AG04450 (cell line): ENCODE measurements at regions of chr13 and their contacts with region 1.

Region 1: GRCh38 chr13:80342471-80343380 is 1.8 kb upstream of the SPRY2 start:
- DNase-seq: no peak
- H3K4me3 ChIP-seq: peak overlapping the region; percentile 95
- H3K27ac ChIP-seq: peak overlapping the region; percentile 65
- H3K27me3 ChIP-seq: no peaks in the 10 kb centered on the region
- CTCF ChIP-seq: peak; percentile 84

Region 2: GRCh38 chr13:79749984-79750551 is 592.7 kb before region 1 on chr13:
- CTCF ChIA-PET with region 1: interaction called, 18 read pairs
- POLR2A ChIA-PET with region 1: interaction called, 4 read pairs
- DNase-seq: peak; percentile 88
- H3K4me3 ChIP-seq: no peak overlapping the region
- H3K27ac ChIP-seq: no peak overlapping the region
- H3K27me3 ChIP-seq: no peaks in the 10 kb centered on the region
- CTCF ChIP-seq: no peak

Region 3: DNA sequence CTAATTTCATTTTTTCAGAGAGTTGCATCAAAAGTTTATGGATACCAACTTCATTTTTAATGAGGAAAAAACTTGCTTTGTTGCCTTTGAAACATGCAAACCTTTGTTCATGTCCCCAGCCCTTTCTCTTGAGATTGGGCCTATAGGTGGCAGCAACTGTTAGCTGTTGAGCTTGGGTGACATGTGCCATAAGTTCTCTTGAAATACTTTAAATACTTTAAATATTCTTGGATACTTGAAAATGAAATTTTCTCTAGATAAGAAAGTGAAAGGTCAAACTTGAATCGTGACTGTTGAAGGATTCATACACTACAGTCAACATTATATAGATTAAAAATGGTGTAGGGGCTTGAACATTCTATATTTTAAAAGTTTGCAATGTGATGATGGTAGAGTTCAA is 566.9 kb before region 1 on chr13:
- CTCF ChIA-PET with region 1: interaction called, 15 read pairs
- POLR2A ChIA-PET with region 1: no interaction called
- DNase-seq: peak; percentile 47
- H3K4me3 ChIP-seq: no peak overlapping the region
- H3K27ac ChIP-seq: no peak overlapping the region
- H3K27me3 ChIP-seq: no peaks in the 10 kb centered on the region
- CTCF ChIP-seq: peak; percentile 76

Region 4: GRCh38 chr13:79936368-79937136 is 406.2 kb before region 1 on chr13:
- CTCF ChIA-PET with region 1: interaction called, 21 read pairs
- POLR2A ChIA-PET with region 1: interaction called, 5 read pairs
- DNase-seq: peak; percentile 97
- H3K4me3 ChIP-seq: no peak overlapping the region; the same call in 1 of the 2 replicates
- H3K27ac ChIP-seq: peak overlapping the region; percentile 99
- H3K27me3 ChIP-seq: no peaks in the 10 kb centered on the region
- CTCF ChIP-seq: no peak

Region 5: DNA sequence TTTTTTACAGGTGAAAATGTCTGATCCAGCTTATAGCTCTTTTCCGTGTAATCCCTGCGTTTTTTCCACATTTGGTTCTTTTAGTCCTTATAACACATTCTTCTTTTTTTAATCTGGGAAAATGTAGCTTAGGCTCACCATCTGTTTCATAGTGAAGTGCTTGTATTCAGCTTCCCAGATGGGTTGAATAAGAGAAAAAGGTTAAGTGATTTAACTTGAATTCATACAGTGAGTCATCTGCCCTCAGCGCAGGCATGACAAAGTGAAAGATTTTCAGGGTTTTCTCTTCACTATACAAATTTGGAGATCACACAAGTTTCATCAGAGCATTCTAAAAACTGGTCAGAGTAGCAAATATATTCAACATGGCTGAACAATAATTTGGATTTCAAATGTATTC is 226.6 kb before region 1 on chr13:
- CTCF ChIA-PET with region 1: interaction called, 10 read pairs
- POLR2A ChIA-PET with region 1: no interaction called
- DNase-seq: peak; percentile 49
- H3K4me3 ChIP-seq: no peak overlapping the region
- H3K27ac ChIP-seq: no peak overlapping the region
- H3K27me3 ChIP-seq: no peaks in the 10 kb centered on the region
- CTCF ChIP-seq: no peak

Region 6: DNA sequence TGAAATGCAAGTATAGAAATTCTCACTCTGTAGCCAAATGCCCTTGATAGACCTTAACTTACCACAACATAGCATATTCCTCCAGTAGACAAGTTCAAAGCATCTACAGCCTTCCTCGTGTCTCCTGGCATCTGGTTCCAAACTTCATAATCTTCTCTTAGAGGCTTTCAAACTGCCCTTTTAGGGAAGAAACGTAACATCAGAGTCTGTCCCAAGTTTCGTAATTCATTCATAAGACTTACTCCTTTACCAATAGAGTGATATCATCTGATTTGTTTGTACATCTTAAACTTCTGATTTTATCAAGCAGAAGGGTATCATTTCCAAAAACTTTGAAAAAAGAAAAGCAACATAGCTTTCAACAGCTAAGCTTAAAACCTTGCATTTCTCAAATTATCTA is 139.2 kb before region 1 on chr13:
- CTCF ChIA-PET with region 1: interaction called, 12 read pairs
- POLR2A ChIA-PET with region 1: no interaction called
- DNase-seq: no peak
- H3K4me3 ChIP-seq: no peak overlapping the region
- H3K27ac ChIP-seq: no peak overlapping the region
- H3K27me3 ChIP-seq: no peaks in the 10 kb centered on the region
- CTCF ChIP-seq: no peak

Region 7: DNA sequence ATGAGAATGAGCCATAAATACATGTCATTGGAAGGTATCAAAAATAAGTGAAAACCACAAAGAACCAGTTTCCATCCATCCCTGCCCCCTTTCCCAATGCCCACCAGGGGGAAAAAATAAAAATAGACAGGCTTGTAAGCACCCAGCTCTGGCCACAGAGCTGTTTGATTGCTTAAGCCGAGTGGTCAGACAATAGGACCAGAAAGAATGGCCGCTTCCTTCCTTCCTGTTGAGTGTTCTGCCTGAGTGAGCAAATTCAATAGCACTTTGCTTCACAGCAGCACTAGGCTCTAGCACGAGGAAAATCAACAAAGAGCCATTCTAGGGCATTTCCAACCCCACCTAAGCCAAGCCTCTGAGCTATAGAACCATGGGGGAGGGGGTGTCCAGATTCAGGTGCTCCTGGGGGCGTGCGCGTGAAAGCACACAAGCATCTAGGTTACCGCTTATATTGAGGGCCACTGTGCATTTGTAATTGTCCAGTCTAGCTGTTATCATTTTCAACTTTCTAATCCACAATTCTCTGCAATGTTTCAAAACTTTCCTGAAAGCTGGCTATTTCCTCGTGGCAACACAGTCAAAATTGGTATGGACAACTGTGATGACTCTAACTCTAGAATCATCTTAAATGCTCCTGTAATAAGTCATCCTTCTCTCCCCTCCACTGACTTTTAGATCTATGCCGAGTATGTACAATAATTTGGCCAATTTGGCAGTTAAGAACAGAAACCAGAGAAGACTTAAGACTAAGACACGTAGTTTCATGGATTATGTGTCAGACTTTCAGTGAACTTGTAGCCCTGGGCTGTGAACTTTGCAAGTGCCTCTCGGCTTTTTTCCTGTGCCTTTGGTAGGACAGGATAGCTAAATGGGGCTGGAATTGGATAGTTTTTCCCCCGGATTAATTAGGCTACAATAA is 66.1 kb before region 1 on chr13:
- CTCF ChIA-PET with region 1: no interaction called
- POLR2A ChIA-PET with region 1: no interaction called
- DNase-seq: no peak
- H3K4me3 ChIP-seq: no peak overlapping the region
- H3K27ac ChIP-seq: no peak overlapping the region
- H3K27me3 ChIP-seq: no peaks in the 10 kb centered on the region
- CTCF ChIP-seq: no peak

Region 8: GRCh38 chr13:80363890-80364503 is 21.3 kb after region 1 on chr13:
- CTCF ChIA-PET with region 1: interaction called, 39 read pairs
- POLR2A ChIA-PET with region 1: interaction called, 5 read pairs
- DNase-seq: no peak
- H3K4me3 ChIP-seq: no peak overlapping the region
- H3K27ac ChIP-seq: no peak overlapping the region
- H3K27me3 ChIP-seq: no peaks in the 10 kb centered on the region
- CTCF ChIP-seq: peak; percentile 83